Endothelial cell of umbilical vein (primary cell): ENCODE measurements at regions of chr11 and their contacts with region 1.

Region 1: DNA sequence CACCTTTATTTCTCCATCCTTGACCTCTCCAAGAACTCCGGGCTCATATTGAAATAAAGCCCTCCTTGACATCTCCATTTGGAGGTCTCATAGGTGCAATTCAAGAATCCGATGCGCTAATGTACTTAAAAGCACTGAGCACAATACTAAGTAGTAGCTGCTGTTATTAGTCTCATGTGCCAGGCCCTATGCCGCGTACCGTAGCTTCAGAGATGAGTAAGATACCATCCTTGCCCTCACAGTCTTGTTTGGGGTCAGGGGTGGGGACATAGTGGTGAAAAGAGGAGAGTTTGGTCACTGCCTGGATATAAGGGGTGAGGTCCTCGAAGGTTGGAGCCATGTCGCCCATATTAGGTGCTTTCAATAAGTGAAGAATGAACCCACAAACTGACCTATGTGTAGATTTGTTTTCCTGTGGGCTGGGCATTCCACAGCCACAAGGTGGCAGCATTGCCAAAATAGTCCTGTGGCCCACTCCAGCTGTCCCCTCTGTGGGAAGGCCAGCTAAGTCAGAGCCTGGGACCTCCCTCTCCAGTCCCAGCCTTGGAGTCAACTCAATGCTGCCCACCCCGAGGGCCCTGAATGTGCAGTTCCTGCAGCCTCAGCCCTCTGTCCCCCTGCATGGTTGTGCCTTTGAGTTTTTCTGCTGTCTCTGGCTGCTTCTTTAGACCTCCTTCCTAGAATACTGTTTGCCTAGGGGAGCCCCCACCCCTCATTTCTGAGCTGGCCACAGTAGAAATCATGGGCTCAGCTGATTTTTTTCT is 6.5 kb downstream of the DCPS start:
- DNase-seq: peak; percentile 78
- H3K4me3 ChIP-seq: no peak overlapping the region
- H3K27ac ChIP-seq: no peak overlapping the region
- H3K4me1 ChIP-seq: no peaks in the 10 kb centered on the region
- H3K27me3 ChIP-seq: no peaks in the 10 kb centered on the region
- CTCF ChIP-seq: peak; percentile 89 to 91
- POLR2A ChIP-seq: no peak

Region 2: GRCh38 chr11:126334659-126335462 is 24.5 kb after region 1 on chr11:
- CTCF ChIA-PET with region 1: interaction called, 13 read pairs
- POLR2A ChIA-PET with region 1: no interaction called
- dilution Hi-C with region 1: no loop called
- intact Hi-C with region 1: loop called (anchors 1 kb)
- DNase-seq: no peak
- H3K4me3 ChIP-seq: no peak overlapping the region
- H3K27ac ChIP-seq: peak overlapping the region; percentile 95
- H3K4me1 ChIP-seq: peaks cover 32% of the 10 kb centered on the region
- H3K27me3 ChIP-seq: no peaks in the 10 kb centered on the region
- CTCF ChIP-seq: no peak
- POLR2A ChIP-seq: no peak

Region 3: DNA sequence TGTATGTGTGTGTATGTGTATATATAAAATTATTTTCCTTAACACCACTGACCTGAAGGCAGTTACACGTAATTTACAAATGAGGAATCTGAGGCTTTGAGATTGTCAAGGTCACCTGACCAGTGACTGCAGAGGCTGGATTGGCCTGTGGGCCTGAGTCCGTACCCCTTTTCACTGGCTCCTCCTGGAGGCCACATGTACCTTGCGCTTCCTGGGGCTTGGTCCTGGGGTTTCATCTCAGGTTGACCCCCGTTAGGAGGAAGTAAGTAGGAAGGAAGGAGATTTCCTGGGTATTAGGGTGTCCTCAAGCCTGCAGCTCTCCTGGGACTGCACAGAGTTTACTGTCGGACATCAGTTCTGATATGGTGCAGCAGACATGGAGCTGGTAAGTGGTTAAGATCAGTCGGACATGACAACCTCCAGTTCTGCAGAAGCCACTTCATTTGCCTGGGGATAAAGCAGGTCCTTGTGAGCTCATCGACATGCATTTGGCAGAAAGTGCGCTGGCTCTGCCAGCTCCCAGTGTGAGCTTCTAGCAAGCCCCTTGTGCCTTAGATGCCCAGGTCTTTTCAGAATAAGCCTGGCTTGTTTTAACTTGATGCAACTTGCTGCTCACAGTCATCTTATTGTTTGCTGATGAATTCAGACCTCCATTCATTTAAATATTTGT is 81.7 kb after region 1 on chr11:
- CTCF ChIA-PET with region 1: interaction called, 12 read pairs
- POLR2A ChIA-PET with region 1: no interaction called
- dilution Hi-C with region 1: no loop called
- intact Hi-C with region 1: loop called (anchors 1 kb)
- DNase-seq: no peak
- H3K4me3 ChIP-seq: no peak overlapping the region
- H3K27ac ChIP-seq: no peak overlapping the region
- H3K4me1 ChIP-seq: no peaks in the 10 kb centered on the region
- H3K27me3 ChIP-seq: no peaks in the 10 kb centered on the region
- CTCF ChIP-seq: no peak
- POLR2A ChIP-seq: no peak

Region 4: DNA sequence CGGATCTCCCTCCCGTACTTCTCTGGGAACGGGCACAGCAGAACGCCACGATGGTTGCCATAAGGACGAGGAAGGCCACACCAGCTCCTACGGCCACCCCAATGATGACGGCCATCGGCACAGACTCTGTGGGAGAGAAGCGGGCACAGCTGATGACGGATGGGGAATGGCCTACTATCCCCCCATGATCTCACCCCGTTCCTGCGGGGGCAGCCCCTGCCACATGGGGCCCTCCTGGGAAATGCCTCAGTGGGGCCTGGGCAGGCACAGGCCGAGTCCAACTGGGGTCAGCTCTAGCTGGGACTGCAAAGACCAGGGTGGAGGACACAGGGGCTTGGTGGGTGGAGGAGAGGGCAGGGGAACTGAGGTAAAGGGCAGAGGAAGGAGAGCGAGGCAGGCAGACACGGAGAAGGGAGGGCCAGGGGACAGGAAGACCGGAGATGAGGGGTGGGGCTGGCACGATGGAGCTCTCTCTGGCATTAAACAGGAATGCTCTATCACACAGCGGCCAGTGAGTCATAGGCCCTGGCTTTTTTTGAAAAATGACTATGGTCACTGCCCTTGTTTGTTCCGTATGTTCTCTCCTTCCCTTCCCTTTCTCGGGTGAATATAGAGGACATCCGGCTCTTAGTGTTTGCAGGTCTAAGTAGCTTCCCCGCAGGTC is 121.1 kb after region 1 on chr11:
- CTCF ChIA-PET with region 1: interaction called, 53 read pairs
- POLR2A ChIA-PET with region 1: no interaction called
- dilution Hi-C with region 1: no loop called
- intact Hi-C with region 1: loop called (anchors 1 kb)
- DNase-seq: peak; percentile 62
- H3K4me3 ChIP-seq: no peak overlapping the region
- H3K27ac ChIP-seq: peak overlapping the region; percentile 58
- H3K4me1 ChIP-seq: peaks cover 11% of the 10 kb centered on the region
- H3K27me3 ChIP-seq: no peaks in the 10 kb centered on the region
- CTCF ChIP-seq: no peak
- POLR2A ChIP-seq: no peak

Region 5: DNA sequence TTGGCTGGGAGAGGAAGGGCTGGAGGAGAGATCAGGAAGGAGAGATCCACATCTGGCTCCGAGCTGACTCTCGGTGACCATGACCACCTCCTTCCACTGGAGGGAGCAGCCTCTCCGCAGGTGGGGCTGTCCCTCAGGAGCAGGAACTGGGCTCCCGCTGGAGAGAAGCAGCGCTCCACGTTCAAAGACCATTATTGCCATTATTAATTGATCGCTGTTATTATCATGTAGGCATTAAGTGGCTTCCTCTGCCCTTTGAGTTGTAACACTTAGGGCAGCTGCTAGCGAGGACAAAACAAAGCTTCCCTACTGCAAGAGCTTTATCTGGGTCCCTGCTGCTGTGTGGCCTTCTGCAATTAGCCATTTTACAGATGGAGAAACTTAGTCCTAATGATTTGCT is 297.0 kb after region 1 on chr11:
- CTCF ChIA-PET with region 1: interaction called, 4 read pairs
- POLR2A ChIA-PET with region 1: no interaction called
- dilution Hi-C with region 1: no loop called
- intact Hi-C with region 1: loop called (anchors 1 kb)
- DNase-seq: peak; percentile 5
- H3K4me3 ChIP-seq: no peak overlapping the region
- H3K27ac ChIP-seq: no peak overlapping the region
- H3K4me1 ChIP-seq: no peaks in the 10 kb centered on the region
- H3K27me3 ChIP-seq: no peaks in the 10 kb centered on the region
- CTCF ChIP-seq: peak; percentile 42 to 61
- POLR2A ChIP-seq: no peak